ENCODE measurements at regions of chr3 and their contacts with region 1.

Region 1: GRCh38 chr3:31219131-31219843 is 313.4 kb upstream of the STT3B start:
- DNase-seq: no peak
- ATAC-seq: no peak
- H3K4me3 Mint-ChIP-seq: no peak overlapping the region
- H3K27ac Mint-ChIP-seq: no peak overlapping the region
- H3K4me1 Mint-ChIP-seq: peaks cover 74% of the 10 kb centered on the region
- H3K27me3 Mint-ChIP-seq: no peaks in the 10 kb centered on the region
- CTCF ChIP-seq: no peak

Region 2: GRCh38 chr3:30358871-30359270 is 860.4 kb before region 1 on chr3:
- CTCF ChIA-PET with region 1: no interaction called
- POLR2A ChIA-PET with region 1: no interaction called
- intact Hi-C with region 1: no loop called
- DNase-seq: no peak
- ATAC-seq: no peak
- H3K4me3 Mint-ChIP-seq: no peak overlapping the region
- H3K27ac Mint-ChIP-seq: no peak overlapping the region
- H3K4me1 Mint-ChIP-seq: peaks cover 34% of the 10 kb centered on the region
- H3K27me3 Mint-ChIP-seq: no peaks in the 10 kb centered on the region
- CTCF ChIP-seq: no peak

Region 3: GRCh38 chr3:31253782-31254181 is 34.5 kb after region 1 on chr3:
- CTCF ChIA-PET with region 1: no interaction called
- POLR2A ChIA-PET with region 1: interaction called, 5 read pairs
- intact Hi-C with region 1: loop called (anchors 2 kb)
- DNase-seq: peak; percentile 62
- ATAC-seq: peak; percentile 47
- H3K4me3 Mint-ChIP-seq: no peak overlapping the region
- H3K27ac Mint-ChIP-seq: peak overlapping the region; percentile 89
- H3K4me1 Mint-ChIP-seq: peaks cover 50% of the 10 kb centered on the region
- H3K27me3 Mint-ChIP-seq: no peaks in the 10 kb centered on the region
- CTCF ChIP-seq: no peak

Region 4: DNA sequence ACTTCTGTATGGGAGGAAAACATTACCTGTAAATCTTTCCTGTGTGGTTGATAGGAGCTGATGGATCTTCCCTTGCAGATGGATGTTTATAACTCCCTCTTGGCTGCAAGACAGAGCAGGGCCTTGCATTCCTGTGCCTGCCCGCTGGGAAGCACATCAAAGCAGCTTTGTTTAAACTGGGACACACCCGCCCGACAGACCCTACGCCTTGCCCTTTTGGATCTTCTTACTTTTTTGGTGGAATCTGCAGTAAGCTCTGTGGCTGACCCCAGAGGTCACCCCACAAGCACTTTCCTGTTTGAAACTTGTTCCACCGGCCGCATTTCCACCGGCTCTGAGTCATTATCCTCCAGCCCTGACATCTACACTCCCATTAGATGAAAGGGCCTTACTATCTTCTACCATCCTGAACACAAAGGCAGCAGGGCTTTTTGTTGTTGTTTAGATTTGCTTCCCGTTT is 69.4 kb after region 1 on chr3:
- CTCF ChIA-PET with region 1: no interaction called
- POLR2A ChIA-PET with region 1: no interaction called
- intact Hi-C with region 1: no loop called
- DNase-seq: peak; percentile 68
- ATAC-seq: peak; percentile 61
- H3K4me3 Mint-ChIP-seq: no peak overlapping the region
- H3K27ac Mint-ChIP-seq: no peak overlapping the region
- H3K4me1 Mint-ChIP-seq: peaks cover 13% of the 10 kb centered on the region
- H3K27me3 Mint-ChIP-seq: no peaks in the 10 kb centered on the region
- CTCF ChIP-seq: no peak